Left ventricle myocardium superior (tissue), 1 donor: ENCODE measurements at regions of chr11 and their contacts with region 1.

Region 1: DNA sequence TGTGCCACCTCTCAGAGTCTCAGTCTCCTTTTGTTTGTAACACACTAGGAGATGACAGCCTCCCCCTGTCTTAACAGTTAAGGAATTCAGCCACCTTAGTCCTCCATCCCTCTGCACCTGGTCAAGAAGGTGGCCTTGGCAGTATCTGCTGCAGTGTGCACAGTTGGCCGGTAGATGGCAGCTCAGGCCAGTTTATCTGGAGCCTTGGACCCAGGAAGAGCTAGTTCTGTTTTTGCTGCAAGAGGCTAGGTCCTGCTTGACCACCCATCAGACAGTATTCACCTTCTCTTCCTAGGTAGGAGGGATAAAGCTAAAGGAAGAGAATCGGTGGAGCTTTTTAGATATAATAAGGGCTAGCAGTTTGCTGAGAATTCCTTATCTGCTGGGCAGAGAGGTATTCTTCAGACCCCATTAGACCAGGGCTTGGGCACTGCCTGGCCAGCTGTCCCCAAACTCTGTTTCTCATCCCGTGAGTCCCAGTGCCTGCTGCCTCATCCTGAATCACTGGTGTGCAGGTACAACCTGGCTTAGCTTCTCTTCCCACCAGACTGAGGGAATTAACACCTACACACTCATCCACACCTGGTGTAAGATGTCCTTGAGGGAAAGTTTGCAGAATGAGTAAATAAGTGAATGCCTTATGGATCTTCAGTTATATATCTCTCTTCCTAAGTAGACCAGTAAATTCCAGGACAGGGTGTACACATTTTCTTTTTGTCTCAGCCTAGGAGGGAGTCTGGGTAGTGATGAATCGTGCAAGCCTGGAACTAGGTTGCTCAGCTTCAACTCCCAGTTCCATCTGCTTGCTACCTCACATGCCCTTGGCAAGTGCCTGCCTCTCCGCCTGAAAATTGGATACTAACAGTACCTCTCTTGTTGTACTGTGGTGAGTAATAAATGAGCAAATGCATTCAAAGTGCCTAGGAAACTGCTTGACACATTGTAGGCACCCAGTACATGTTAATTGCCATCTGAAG is 70.8 kb upstream of the NARS2 start:
- DNase-seq: peak; percentile 79
- ATAC-seq: peak; percentile 91

Region 2: DNA sequence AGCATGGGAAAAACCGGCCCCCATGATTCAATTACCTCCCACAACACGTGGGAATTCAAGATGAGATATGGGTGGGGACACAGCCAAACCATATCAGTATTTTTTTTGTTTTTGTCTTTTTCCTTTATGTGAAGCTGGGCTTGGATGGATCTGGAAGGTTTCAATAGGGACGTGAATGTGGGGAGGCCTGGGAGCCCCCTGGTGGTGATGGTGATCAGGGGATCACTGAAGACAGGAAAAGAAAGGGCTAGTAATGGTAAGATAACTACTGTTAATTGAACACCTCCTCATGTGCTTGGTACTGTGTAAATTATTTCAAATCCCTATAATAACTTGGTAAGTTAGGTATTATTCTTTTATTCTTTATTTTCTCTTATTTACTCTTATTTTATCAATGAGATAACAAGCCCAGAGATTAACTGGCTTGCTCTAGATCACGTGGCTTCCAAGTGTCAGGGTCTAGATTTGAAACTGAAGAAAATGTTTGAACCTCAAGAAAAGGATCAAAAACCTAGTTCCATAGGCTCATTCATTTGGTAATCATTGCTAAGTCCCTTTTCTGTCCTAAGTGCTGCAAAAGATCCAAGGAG is 431.1 kb after region 1 on chr11:
- intact Hi-C with region 1: loop called (anchors 10 kb)
- DNase-seq: peak; percentile 68
- ATAC-seq: peak; percentile 55